Cardiac septum (tissue), 1 donor: ENCODE measurements at regions of chr4 and their contacts with region 1.

Region 1: DNA sequence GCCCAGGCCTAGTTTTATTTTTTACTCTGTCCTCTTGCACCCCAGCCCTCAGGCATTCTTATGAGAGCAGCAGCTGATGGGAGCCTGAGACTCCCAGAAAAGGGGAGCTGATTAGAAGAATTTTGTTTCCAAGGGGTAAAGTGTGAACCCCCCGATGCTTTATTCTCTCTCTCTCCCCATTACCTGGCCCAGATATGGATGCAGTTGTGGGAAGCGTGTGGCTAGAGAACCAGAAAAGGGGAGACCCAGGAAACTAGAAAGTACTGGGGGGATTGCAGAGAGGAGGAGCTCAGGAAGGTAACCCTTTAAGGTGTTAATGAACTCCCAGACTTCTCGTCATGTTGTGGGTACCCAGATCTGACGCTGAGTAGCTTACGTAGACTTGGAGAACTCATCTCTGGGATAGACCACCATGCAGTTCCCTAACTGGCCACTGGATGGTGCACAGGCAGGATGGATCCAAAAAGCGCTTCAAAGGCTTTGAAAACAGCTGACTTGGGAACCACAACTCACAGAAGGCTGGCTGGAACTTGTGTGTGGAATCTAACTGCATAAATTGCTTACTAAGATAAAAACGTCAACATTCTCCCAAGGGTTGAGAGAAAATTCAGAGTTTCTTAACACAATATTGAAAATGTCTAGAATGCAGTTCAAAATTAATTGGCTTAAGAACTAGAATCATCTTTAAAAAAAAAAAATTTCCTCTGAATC is 64.7 kb downstream of the TBC1D14 start:
- DNase-seq: peak; percentile 90

Region 2: GRCh38 chr4:6909073-6909965 is 65.0 kb before region 1 on chr4 and contains the start of gene TBC1D14:
- intact Hi-C with region 1: loop called (anchors 5 kb)
- DNase-seq: peak; percentile 95
- total RNA-seq, gene TBC1D14: 30.8 TPM